ENCODE measurements at regions of chr19 and their contacts with region 1.

Region 1: GRCh38 chr19:3572132-3572854 is 451 bp upstream of the HMG20B start:
- DNase-seq: peak; percentile 93 to 100 (median 96)
- ATAC-seq: peak; percentile 92
- H3K4me3 ChIP-seq: peak overlapping the region; percentile 98
- H3K27ac ChIP-seq: no peak overlapping the region
- H3K4me1 ChIP-seq: peaks cover 25 to 62% of the 10 kb centered on the region in 2 experiments
- H3K27me3 ChIP-seq: no peaks in the 10 kb centered on the region
- CTCF ChIP-seq: no peak
- EP300 ChIP-seq: no peak; the same call in 1 of the 2 replicates
- POLR2A ChIP-seq: no peak
- RAD21 ChIP-seq: no peak

Region 2: DNA sequence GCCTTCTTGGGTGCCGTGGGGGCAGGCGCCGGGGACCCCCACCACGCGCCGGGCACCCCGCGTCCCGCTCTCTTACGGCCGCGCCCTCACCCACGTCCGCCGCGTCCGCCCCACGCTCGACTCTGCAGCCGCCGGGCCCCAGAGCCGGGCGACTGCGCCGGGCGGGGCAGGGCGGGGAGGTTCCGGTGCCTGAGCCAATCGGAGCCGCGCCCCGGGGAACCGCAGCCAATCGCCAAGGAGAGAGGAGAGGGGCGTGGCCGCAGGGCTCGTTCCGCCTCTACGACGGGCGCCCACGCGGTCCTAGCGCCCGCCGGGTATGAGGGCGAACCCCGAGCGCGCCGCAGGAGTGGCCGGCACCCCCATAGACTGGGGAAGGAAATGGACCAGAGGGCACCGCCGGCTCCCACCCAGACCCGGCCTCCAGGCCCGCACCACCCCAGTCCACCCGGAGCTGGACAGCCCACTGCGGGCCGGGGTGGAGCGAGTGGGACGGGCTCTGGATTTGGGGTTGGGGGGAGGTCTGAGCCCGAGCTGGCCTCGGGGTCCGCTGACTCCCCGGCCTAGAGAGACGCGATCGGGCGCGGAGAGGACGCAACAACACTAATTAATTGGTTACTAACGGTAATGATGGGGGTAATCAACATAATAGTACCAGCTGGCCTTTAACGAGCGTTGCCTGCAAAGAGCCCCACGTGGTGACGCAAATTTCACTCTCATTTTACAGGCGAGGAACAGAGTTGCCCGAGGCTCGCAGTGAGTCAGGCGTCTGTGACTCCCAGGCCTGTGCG is 14.6 kb before region 1 on chr19 and contains the start of gene MFSD12:
- CTCF ChIA-PET with region 1: no interaction called
- POLR2A ChIA-PET with region 1: interaction called, 7 read pairs
- in situ Hi-C with region 1: no loop called
- intact Hi-C with region 1: loop called (anchors 2 kb)
- DNase-seq: peak; percentile 97 to 100 (median 99)
- ATAC-seq: peak; percentile 98
- H3K4me3 ChIP-seq: peak within 1 kb of the TSS; percentile 93
- H3K27ac ChIP-seq: peak within 1 kb of the TSS; percentile 79
- H3K4me1 ChIP-seq: peaks cover 24 to 77% of the 10 kb centered on the region in 2 experiments; a peak in 4 of 5 replicates
- H3K27me3 ChIP-seq: no peaks in the 10 kb centered on the region
- CTCF ChIP-seq: no peak
- EP300 ChIP-seq: no peak
- POLR2A ChIP-seq: peak; percentile 68
- RAD21 ChIP-seq: no peak
- polyA plus RNA-seq, gene MFSD12: 0.69 to 1.7 TPM

Region 3: DNA sequence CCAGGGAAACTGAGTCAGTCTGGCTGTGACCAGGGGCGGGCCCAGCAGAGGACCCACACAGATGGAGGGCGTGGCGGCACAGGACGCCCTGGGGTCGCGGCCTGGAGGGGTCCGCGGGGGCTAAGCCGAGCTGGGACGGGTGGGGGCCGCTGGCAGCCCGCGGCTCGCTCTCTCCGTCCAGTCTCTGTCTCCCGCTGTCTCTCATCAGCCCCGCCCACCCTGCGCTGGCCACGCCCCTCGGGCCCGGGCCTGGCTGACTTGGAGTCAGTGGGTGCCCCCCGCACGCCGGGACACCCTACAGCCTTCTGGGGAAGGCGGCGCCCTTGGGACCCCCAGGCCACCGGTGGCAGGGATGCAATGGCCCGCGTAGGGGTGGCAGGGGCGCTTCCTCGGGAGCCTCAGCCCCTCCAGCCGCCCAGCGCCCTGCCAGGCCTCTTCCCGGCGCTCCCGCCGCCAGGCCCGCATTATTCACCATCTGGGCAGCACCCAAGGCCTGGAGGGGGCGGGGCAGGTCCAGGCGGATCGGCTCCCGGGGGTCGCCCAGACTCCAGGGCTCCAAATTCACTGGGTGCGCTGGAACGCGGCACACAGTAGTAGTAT is 34.5 kb after region 1 on chr19 and contains the start of gene TBXA2R:
- CTCF ChIA-PET with region 1: no interaction called
- POLR2A ChIA-PET with region 1: interaction called, 11 read pairs
- in situ Hi-C with region 1: no loop called
- intact Hi-C with region 1: no loop called
- DNase-seq: peak; percentile 91 to 94 (median 92)
- ATAC-seq: peak; percentile 89
- H3K4me3 ChIP-seq: peak within 1 kb of the TSS; percentile 89
- H3K27ac ChIP-seq: peak within 1 kb of the TSS; percentile 98
- H3K4me1 ChIP-seq: peaks cover 38 to 88% of the 10 kb centered on the region in 2 experiments
- H3K27me3 ChIP-seq: no peaks in the 10 kb centered on the region
- CTCF ChIP-seq: no peak
- EP300 ChIP-seq: no peak
- POLR2A ChIP-seq: peak; percentile 58
- RAD21 ChIP-seq: no peak
- polyA plus RNA-seq, gene TBXA2R: 1.5 to 2.6 TPM